ENCODE measurements at regions of chr5 and their contacts with region 1.

Region 1: GRCh38 chr5:76439201-76439600 is 36.1 kb downstream of the IQGAP2 start:
- DNase-seq: no peak
- H3K4me3 Mint-ChIP-seq: no peak overlapping the region
- H3K27ac Mint-ChIP-seq: no peak overlapping the region
- H3K4me1 Mint-ChIP-seq: peaks cover 18% of the 10 kb centered on the region
- H3K27me3 Mint-ChIP-seq: no peaks in the 10 kb centered on the region

Region 2: GRCh38 chr5:76391014-76391413 is 48.2 kb before region 1 on chr5:
- intact Hi-C with region 1: loop called (anchors 1 kb)
- DNase-seq: no peak
- H3K4me3 Mint-ChIP-seq: no peak overlapping the region
- H3K27ac Mint-ChIP-seq: no peak overlapping the region
- H3K4me1 Mint-ChIP-seq: peaks cover 51% of the 10 kb centered on the region
- H3K27me3 Mint-ChIP-seq: peaks cover 5% of the 10 kb centered on the region

Region 3: GRCh38 chr5:76422227-76422626 is 17.0 kb before region 1 on chr5:
- intact Hi-C with region 1: no loop called
- DNase-seq: no peak
- H3K4me3 Mint-ChIP-seq: no peak overlapping the region
- H3K27ac Mint-ChIP-seq: no peak overlapping the region
- H3K4me1 Mint-ChIP-seq: peaks cover 16% of the 10 kb centered on the region
- H3K27me3 Mint-ChIP-seq: no peaks in the 10 kb centered on the region

Region 4: GRCh38 chr5:76766746-76767145 is 327.5 kb after region 1 on chr5:
- intact Hi-C with region 1: no loop called
- DNase-seq: no peak
- H3K4me3 Mint-ChIP-seq: no peak overlapping the region
- H3K27ac Mint-ChIP-seq: no peak overlapping the region
- H3K4me1 Mint-ChIP-seq: peaks cover 10% of the 10 kb centered on the region
- H3K27me3 Mint-ChIP-seq: no peaks in the 10 kb centered on the region

Measured in activated T-helper 1 cell treated with anti-CD3 and anti-CD28 coated beads, Interleukin-12 subunit alpha, Interleukin-12 subunit beta, Interleukin-2, Interleukin-4 antibody, amounts not matched to agents 30 ng/mL and 10 ng/mL and 1 ng/mL, durations not matched to agents 14 hours and 24 hours and 36 hours (primary cell).